Posterior cingulate gyrus (tissue), 11 donors: ENCODE measurements at regions of chr20 and their contacts with region 1.

Region 1: DNA sequence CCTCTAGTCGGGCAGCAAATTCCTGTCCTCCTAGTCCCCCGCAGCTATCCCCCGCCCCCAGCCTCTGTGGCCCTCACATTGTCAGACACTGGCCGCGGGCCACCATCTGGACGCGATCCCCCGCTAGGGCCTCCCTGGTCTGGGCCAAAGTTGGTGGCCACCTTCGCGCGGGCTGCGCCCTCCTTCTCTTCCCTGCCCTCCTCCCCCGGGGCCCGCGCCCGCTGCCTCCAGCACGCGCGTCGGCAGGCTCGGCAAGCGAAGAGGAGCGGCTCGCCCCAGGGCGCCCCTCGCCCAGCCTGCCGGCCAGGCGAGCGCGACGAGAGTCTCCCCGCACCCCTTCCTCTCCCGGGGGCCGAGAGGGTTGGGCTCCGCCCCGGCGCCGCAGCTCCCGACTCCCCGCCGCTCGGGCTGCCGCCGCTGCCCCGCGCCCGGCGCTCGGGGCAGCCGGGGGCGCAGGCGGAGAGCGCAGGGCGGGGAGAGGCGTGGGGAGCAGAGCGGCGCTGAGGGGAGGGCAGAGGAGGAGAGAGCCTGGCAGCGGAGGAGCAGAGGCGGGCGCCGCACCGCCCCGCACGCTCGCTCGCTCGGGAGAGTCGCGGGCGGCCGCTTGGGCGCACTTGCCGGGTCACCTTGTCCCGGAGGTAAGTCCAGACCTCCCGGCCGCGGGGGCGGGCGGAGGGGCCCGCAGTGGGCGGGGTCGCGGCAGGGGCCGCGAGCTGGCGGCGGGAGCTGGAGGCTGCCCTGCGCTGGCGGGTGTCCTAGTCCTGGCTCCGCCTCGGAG is at the start of gene SYNDIG1:
- DNase-seq: peak; percentile 60 to 96 (median 76)

Region 2: DNA sequence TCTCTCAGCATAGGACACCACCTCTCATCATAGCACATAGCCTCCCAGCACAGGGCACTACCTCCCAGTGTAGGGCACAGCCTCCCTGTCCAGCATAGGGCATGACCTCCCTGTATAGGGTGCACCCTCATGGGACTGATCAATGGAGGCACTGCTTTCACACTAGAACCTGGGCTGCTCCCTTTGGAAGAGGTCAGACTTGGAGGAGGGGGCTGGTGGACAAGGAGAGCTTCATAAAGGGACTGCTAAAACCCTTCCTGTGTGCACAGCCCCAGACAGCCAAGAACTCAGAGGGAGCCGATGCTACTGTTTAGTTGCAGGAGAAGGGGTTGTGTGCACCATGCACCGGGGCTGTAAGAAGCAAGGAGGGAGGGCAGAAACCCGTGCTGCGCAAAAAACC is 758.5 kb before region 1 on chr20:
- intact Hi-C with region 1: no loop called
- DNase-seq: no peak

Region 3: DNA sequence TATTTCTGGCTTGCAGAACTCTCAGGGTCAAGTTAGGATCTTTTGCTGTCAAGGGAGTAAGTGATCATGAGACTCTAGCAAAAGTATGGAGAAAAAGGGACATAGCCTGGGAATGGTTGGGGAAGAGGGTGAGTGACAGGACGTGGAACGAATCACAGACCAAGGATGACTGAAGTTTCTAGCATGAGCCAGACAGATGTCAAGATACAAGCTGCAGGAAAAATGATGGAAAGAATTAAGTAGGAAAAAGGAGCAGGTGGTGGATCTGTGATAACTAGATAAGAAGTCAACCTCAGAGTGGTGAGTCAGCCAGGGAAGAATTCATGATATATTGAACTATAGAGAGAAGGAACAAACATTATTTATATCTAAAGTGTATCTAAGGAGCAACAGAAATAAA is 159.7 kb before region 1 on chr20:
- intact Hi-C with region 1: loop called (anchors 5 kb)
- DNase-seq: no peak

Region 4: DNA sequence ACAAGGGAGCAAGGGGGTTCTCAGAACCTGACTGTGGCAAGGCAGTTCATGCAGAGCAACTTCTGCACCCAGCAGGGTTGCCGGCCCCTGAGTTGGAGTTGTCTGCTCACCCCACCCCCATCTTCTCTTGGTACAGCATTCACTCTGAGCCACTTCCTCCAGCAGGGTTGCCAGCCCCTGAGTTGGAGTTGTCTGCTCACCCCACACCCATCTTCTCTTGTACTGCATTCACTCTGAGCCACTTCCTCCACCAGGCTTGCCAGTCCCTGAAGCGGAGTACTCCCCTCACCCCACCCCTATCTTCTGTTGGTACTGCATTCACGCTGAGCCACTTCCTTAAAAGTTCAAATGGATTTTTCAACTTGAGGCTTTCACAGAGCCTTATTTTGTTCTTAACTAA is 79.6 kb before region 1 on chr20:
- intact Hi-C with region 1: loop called (anchors 10 kb)
- DNase-seq: peak in 3 of 10 donors; percentile 10 to 87 (median 55)

Region 5: DNA sequence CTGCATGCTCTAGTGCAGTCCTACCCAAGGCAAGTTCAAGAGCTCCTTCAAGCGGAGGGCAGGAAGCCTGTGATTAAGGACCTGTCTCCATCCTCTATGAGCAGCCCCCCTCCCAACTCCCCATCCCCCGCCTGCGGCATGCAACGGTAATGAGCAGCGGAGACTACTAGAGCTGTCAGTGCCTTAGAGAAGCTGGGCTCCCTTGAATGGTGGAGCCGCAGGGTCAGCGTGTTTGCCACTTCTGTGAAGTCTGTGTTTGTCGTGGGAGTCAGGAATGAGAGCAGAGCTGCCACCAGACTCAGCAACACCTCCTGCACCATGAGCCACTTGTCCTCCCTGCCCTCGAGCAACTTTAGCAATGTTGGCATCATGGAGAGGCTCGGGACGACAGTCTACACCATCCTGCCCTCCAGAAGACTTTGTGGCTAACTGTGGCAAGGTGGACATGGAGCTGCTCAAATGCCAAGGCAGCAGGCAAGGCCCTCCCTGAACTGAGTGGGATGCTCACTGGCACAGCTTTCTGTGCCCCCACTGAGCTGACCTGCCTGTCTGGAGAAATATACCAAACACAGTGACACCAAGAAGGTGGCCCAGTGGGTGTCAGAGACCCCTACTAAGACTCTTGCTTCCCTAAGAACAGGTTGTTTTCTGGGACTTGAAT is 23.7 kb before region 1 on chr20:
- intact Hi-C with region 1: no loop called
- DNase-seq: peak in 1 of 10 donors; percentile 15

Region 6: GRCh38 chr20:24694727-24695597 is 225.7 kb after region 1 on chr20:
- intact Hi-C with region 1: no loop called
- DNase-seq: peak in 1 of 10 donors; percentile 80